ENCODE measurements at regions of chr19 and their contacts with region 1.

Region 1: DNA sequence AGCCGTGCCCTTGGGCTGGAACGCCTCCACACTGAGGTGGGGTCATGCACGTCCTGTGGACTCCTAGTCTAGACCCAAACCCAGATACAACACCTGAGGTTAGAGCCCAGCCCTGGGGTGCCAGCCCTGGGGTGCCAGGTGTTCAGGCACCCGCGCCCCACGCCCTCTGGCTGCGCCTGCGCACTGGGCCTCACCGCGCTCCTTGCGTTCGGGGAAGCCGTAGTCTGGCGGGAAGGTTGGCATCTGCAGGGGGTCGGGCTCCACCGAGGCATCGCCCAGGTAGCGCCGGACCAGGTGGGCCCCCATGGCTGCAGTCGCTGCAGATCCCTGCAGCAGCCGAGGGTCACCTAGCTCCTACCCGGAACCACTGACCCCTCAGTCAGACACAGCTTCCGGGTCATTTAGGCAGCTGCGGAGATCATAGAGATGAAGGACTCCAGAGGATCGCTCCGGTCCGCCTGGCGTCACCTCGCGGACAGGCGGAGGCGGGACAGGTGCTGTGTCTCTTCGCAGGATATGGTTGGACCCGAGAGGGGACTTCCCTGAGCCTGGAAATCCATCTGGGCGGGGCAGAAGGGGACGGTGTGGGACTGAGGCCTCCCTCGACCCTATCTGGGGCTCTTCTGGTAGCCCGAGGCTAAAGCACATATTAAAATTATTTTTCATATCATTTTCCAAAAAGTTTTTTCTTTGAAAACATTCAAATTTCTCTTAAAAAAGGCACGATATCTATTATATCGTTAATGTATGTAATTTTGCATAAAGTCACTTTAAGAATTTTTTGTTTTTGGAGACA is at the start of gene NDUFB7:
- DNase-seq: peak; percentile 92 to 97 (median 95)
- ATAC-seq: peak; percentile 97
- H3K4me3 ChIP-seq: peak within 1 kb of the TSS; percentile 89
- H3K27ac ChIP-seq: peak within 1 kb of the TSS; percentile 98
- H3K4me1 ChIP-seq: peaks cover 7% of the 10 kb centered on the region
- H3K27me3 ChIP-seq: no peaks in the 10 kb centered on the region
- total RNA-seq, gene NDUFB7: 352 to 481 (median 400) TPM

Region 2: DNA sequence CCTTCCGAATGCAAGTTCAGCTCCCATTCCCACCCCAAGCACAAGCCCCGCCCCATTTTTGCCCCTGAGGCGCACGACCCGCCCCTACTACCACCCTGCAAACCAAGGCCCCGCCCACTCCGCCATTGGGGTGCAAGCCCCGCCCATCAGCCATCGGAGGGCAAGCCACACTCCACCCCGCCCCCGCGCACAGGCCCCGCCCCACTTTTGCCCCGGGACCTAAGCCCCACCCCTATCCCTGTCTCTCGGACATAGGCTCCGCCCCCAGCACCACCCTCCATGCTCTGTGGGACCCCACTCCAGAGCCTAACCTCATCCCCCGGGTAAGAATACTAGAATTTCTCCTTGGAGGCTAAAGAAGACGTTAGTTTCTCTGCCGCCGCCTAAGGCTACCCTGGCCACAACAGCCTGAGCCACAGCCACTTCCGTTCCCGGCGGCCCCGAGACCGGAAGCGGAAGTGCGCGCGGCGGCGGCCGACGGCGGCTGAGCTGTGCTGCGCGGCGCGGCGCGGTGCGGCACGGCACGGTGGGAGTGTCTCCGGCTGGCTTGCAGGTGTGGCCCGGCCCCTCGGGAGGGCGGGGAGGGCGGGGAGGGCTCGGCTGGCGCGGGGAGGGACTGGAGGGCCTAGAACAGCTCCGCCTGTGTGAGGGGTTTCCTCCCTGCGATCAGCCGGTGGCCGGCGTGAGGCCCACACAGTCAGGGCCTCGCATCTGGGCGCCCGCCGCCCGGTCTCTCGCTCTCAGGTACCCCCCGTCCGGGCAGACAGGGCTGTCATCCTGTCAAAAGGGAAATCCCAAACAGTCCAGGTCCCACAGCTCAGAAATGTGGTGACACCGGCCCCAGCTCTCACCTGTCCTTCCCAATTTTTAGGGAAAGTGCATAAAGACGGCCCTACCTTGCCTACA is 118.0 kb after region 1 on chr19 and contains the start of gene ZNF333:
- intact Hi-C with region 1: loop called in 3 of 4 experiments (anchors 5 to 10 kb)
- DNase-seq: peak; percentile 98 to 99 (median 99)
- ATAC-seq: peak; percentile 99
- H3K4me3 ChIP-seq: peak within 1 kb of the TSS; percentile 89
- H3K27ac ChIP-seq: peak within 1 kb of the TSS; percentile 99
- H3K4me1 ChIP-seq: no peaks in the 10 kb centered on the region
- H3K27me3 ChIP-seq: no peaks in the 10 kb centered on the region
- total RNA-seq, gene ZNF333: 8.3 to 10.6 (median 10.1) TPM

Region 3: GRCh38 chr19:14890643-14891379 is 318.9 kb after region 1 on chr19:
- intact Hi-C with region 1: loop called in 1 of 4 experiments (anchors 10 kb)
- DNase-seq: peak in 1 of 3 donors; percentile 40
- ATAC-seq: no peak
- H3K4me3 ChIP-seq: no peak overlapping the region
- H3K27ac ChIP-seq: no peak overlapping the region
- H3K4me1 ChIP-seq: peaks cover 2% of the 10 kb centered on the region
- H3K27me3 ChIP-seq: no peaks in the 10 kb centered on the region